Activated T-helper 2 cell treated with anti-CD3 and anti-CD28 coated beads, Interferon-gamma antibody, Interleukin-2, Interleukin-4, amounts not matched to agents 10 μg/mL and 5 μg/mL and 100 μg/mL, durations not matched to agents 14 hours and 24 hours and 36 hours (primary cell): ENCODE measurements at regions of chr2 and their contacts with region 1.

Region 1: GRCh38 chr2:171244970-171245782 is 84.5 kb upstream of the TLK1 start:
- DNase-seq: no peak
- H3K4me3 Mint-ChIP-seq: no peak overlapping the region
- H3K27ac Mint-ChIP-seq: no peak overlapping the region
- H3K4me1 Mint-ChIP-seq: peaks cover 40% of the 10 kb centered on the region
- H3K27me3 Mint-ChIP-seq: peaks cover 3% of the 10 kb centered on the region

Region 2: GRCh38 chr2:171210864-171211431 is 34.2 kb before region 1 on chr2:
- intact Hi-C with region 1: loop called (anchors 1 kb)
- DNase-seq: peak; percentile 54
- H3K4me3 Mint-ChIP-seq: peak overlapping the region; percentile 45
- H3K27ac Mint-ChIP-seq: peak overlapping the region; percentile 75
- H3K4me1 Mint-ChIP-seq: peaks cover 38% of the 10 kb centered on the region
- H3K27me3 Mint-ChIP-seq: no peaks in the 10 kb centered on the region

Region 3: DNA sequence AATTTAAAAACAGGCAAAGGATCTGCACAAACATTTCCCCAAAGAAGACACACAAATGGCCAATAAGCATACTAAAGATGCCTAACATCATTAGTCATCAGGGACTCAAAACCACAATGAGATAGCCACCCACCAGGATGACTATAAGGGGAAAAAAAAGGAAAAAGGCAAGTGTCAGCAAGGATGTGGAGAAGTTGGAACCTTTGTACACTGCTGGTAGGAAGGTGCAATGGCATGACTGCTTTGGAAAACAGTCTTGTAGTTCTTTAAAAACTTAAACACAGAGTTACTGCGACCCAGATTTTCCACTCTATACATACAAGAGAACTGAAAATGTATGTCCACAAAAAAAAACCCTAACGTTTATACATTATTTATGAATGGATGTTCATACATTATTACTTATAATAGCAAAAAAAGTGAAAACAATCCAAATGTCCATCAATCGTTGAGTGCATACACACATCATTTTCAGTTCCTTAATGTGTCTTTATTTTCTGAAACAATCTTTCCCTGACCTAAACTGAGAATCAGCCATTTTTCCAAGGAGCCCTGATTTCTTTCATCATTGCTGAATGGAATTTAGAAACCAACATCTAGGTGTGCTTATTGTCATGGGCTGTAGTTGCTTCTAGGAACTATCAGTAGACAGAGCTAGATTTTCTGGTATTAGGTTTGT is 19.7 kb before region 1 on chr2:
- intact Hi-C with region 1: no loop called
- DNase-seq: no peak
- H3K4me3 Mint-ChIP-seq: no peak overlapping the region
- H3K27ac Mint-ChIP-seq: no peak overlapping the region
- H3K4me1 Mint-ChIP-seq: peaks cover 7% of the 10 kb centered on the region
- H3K27me3 Mint-ChIP-seq: peaks cover 3% of the 10 kb centered on the region